ENCODE measurements at regions of chr3 and their contacts with region 1.

Region 1: DNA sequence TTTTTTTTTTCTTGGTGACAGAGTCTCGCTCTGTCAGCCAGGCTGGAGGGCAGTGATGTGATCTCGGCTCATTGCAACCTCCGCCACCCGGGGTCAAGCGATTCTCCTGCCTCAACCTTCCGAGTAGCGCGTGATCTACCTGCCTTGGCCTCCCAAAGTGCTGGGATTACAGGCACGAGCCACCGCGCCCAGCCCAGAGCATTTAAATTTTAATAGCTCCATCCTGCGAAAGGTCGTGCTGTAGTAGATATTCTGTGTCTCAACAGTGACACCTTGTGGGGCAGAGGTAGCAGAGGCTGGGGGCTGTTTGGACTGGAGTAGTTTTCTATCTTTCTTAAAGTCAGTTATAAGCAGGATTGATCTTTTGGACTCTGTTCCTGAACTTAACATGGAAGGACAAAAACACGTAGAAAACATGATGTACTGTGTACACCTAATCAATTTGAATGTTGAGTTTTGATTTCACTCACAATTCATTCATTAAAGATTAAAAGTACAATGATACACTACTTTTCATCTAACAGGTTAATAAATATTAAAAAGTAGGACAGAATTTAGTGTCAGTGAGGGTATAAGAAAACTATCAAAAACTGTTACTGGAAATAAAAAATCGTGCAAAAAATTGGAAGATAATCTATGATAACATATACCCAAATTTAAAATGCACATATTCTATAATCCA is 11.0 kb upstream of the PDCD6IP start:
- DNase-seq: peak; percentile 71
- H3K4me3 Mint-ChIP-seq: no peak overlapping the region
- H3K27ac Mint-ChIP-seq: no peak overlapping the region
- H3K4me1 Mint-ChIP-seq: peaks cover 19% of the 10 kb centered on the region
- H3K27me3 Mint-ChIP-seq: no peaks in the 10 kb centered on the region
- CTCF ChIP-seq: peak; percentile 77

Region 2: GRCh38 chr3:33131331-33132018 is 656.0 kb before region 1 on chr3:
- CTCF ChIA-PET with region 1: interaction called, 9 read pairs
- POLR2A ChIA-PET with region 1: no interaction called
- intact Hi-C with region 1: loop called (anchors 2 kb)
- DNase-seq: peak; percentile 75
- H3K4me3 Mint-ChIP-seq: no peak overlapping the region
- H3K27ac Mint-ChIP-seq: no peak overlapping the region
- H3K4me1 Mint-ChIP-seq: no peaks in the 10 kb centered on the region
- H3K27me3 Mint-ChIP-seq: no peaks in the 10 kb centered on the region
- CTCF ChIP-seq: peak; percentile 71

Region 3: DNA sequence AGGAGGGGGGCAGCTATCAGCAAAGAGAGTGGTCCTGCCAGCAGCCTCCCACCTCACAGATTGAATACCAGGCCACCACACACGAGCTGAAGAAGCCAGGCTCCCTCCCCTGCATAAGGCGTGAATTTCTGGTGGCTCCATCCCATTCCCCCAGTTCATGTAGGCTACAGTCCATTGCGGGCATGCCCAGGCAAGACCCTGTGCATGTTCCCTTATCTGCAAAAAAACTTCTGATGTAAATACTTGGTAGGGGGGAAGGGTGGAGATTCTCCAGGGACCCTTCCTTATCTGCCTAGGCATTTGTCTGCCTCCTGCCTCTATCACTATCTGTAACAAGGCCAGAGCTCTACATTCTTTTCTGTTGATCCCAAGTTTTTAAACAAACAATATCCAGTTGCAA is 319.7 kb before region 1 on chr3:
- CTCF ChIA-PET with region 1: no interaction called
- POLR2A ChIA-PET with region 1: no interaction called
- intact Hi-C with region 1: no loop called
- DNase-seq: no peak
- H3K4me3 Mint-ChIP-seq: no peak overlapping the region
- H3K27ac Mint-ChIP-seq: peak overlapping the region; percentile 63
- H3K4me1 Mint-ChIP-seq: peaks cover 6% of the 10 kb centered on the region
- H3K27me3 Mint-ChIP-seq: no peaks in the 10 kb centered on the region
- CTCF ChIP-seq: no peak

Region 4: GRCh38 chr3:33563474-33563873 is 224.0 kb before region 1 on chr3:
- CTCF ChIA-PET with region 1: interaction called, 10 read pairs
- POLR2A ChIA-PET with region 1: no interaction called
- intact Hi-C with region 1: no loop called
- DNase-seq: no peak
- H3K4me3 Mint-ChIP-seq: no peak overlapping the region
- H3K27ac Mint-ChIP-seq: no peak overlapping the region
- H3K4me1 Mint-ChIP-seq: no peaks in the 10 kb centered on the region
- H3K27me3 Mint-ChIP-seq: no peaks in the 10 kb centered on the region
- CTCF ChIP-seq: no peak

Region 5: DNA sequence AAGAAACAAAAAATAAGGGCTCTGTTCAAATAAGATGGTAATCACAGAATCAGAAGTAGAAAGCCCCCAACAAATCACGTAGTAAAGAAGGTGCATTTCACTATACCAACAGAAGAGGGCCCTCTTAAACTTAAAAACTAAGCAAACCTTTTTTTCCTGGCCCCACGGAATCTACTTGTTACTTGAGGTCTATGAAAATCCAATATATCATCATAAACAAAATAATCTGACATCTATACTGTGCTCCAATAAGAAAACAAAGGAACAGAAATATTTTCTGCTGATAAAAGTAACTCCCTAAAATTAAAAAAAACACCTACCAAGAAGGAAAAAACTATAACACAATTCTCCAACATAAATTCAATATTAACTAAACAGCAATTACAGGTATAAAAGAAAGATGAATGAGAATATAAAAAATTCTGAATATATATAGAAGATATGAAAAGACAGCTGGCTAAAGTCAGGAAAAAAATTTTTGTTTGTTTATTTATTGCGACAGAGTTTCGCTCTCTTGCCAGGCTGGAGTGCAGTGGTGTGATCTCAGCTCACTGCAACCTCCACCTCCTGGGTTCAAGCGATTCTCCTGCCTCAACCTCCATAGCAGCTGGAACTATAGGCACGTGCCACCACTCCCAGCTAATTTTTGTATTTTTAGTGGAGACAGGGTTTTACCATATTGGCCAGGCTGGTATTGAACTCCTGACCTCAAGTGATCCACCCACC is 151.2 kb before region 1 on chr3:
- CTCF ChIA-PET with region 1: interaction called, 28 read pairs
- POLR2A ChIA-PET with region 1: interaction called, 5 read pairs
- intact Hi-C with region 1: loop called (anchors 1 kb)
- DNase-seq: peak; percentile 60
- H3K4me3 Mint-ChIP-seq: no peak overlapping the region
- H3K27ac Mint-ChIP-seq: peak overlapping the region; percentile 2
- H3K4me1 Mint-ChIP-seq: peaks cover 5% of the 10 kb centered on the region
- H3K27me3 Mint-ChIP-seq: no peaks in the 10 kb centered on the region
- CTCF ChIP-seq: peak; percentile 74

Region 6: GRCh38 chr3:33773637-33774036 is 13.8 kb before region 1 on chr3:
- CTCF ChIA-PET with region 1: interaction called, 121 read pairs
- POLR2A ChIA-PET with region 1: interaction called, 12 read pairs
- intact Hi-C with region 1: no loop called
- DNase-seq: no peak
- H3K4me3 Mint-ChIP-seq: no peak overlapping the region
- H3K27ac Mint-ChIP-seq: no peak overlapping the region
- H3K4me1 Mint-ChIP-seq: no peaks in the 10 kb centered on the region
- H3K27me3 Mint-ChIP-seq: no peaks in the 10 kb centered on the region
- CTCF ChIP-seq: no peak

Region 7: GRCh38 chr3:33807190-33807589 is 19.7 kb after region 1 on chr3:
- CTCF ChIA-PET with region 1: interaction called, 11 read pairs
- POLR2A ChIA-PET with region 1: no interaction called
- intact Hi-C with region 1: no loop called
- DNase-seq: no peak
- H3K4me3 Mint-ChIP-seq: no peak overlapping the region
- H3K27ac Mint-ChIP-seq: no peak overlapping the region
- H3K4me1 Mint-ChIP-seq: peaks cover 59% of the 10 kb centered on the region
- H3K27me3 Mint-ChIP-seq: no peaks in the 10 kb centered on the region
- CTCF ChIP-seq: no peak

Region 8: GRCh38 chr3:33911525-33912322 is 124.3 kb after region 1 on chr3:
- CTCF ChIA-PET with region 1: no interaction called
- POLR2A ChIA-PET with region 1: no interaction called
- intact Hi-C with region 1: no loop called
- DNase-seq: peak; percentile 41
- H3K4me3 Mint-ChIP-seq: no peak overlapping the region
- H3K27ac Mint-ChIP-seq: no peak overlapping the region
- H3K4me1 Mint-ChIP-seq: peaks cover 14% of the 10 kb centered on the region
- H3K27me3 Mint-ChIP-seq: no peaks in the 10 kb centered on the region
- CTCF ChIP-seq: no peak